PC-3 (cell line): ENCODE measurements at regions of chr18 and their contacts with region 1.

Region 1: DNA sequence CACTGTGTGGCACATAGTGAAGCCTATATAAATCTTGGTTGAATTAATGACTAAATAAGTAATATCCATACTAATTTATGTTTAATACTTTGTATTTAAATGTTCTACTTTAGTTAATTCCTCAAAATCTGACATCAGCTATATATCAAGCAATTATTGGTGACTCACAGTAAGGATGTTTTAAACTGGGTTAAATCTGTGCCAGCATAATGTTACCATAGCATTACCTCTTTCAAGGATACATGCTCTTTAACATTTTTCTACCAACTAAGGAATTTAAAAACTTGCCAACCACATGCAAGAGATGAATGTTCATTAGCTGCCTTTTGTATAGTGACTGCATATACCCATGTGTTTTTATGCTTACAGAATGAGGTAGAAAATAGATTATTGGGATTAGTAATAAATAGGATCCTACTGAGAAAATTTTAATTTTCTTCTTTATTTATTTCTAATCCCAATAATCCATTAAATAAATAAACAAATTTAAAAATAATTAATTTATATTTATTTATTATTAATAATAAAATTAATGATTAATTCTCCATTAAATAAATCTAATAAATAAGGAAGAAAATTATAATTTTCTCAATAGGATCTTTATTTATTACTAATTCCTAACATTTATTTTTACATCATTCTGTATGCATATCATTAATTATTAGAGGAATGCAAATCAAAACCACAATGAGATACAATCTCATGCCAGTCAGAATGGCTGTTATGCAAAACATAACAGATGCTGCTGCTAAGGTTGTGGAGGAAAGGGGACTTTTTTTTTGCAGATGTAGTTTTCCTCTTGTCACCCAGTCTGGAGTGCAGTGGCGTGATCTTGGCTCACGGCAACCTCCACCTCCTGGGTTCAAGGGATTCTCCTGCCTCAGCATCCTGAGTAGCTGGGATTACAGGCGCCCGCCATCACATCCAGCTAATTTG is 410.7 kb upstream of the DSEL start:
- DNase-seq: no peak
- ATAC-seq: no peak
- H3K4me3 ChIP-seq: no peak overlapping the region
- H3K27ac ChIP-seq: no peak overlapping the region
- H3K4me1 ChIP-seq: peaks cover 16% of the 10 kb centered on the region
- H3K27me3 ChIP-seq: no peaks in the 10 kb centered on the region
- CTCF ChIP-seq: no peak

Region 2: DNA sequence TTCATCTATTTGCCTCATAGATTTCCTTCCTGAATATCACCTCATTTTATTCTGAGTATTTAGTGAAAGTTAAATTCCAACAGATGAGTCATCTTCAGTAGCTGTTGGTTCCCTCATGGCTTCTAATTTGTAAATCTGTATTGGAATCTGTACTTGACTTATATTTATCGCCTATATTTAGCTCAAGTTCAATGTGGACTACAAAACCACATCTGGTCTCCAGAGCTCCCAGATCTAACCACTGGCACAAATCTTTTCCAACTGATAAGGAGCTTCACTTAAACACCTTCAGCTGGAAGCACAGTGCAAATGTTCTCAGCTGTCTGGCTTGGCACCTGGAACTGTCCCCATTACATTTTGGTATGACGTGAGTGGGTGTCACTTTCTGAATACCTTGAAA is 327.9 kb before region 1 on chr18:
- CTCF ChIA-PET with region 1: interaction called, 24 read pairs
- POLR2A ChIA-PET with region 1: no interaction called
- intact Hi-C with region 1: no loop called
- DNase-seq: peak; percentile 35
- ATAC-seq: peak; percentile 40; the same call in 1 of the 2 replicates
- H3K4me3 ChIP-seq: no peak overlapping the region
- H3K27ac ChIP-seq: no peak overlapping the region
- H3K4me1 ChIP-seq: peaks cover 33% of the 10 kb centered on the region
- H3K27me3 ChIP-seq: no peaks in the 10 kb centered on the region
- CTCF ChIP-seq: no peak